Psoas muscle (tissue), 8 donors: ENCODE measurements at regions of chr11 and their contacts with region 1.

Region 1: GRCh38 chr11:58579192-58580129 is 598 bp downstream of the ZFP91 start:
- DNase-seq: peak; percentile 93 to 96
- ATAC-seq: peak; percentile 69 to 76 (median 74)
- H3K4me3 ChIP-seq: peak overlapping the region; percentile 92
- H3K27ac ChIP-seq: peak overlapping the region; percentile 100
- H3K4me1 ChIP-seq: peaks cover 68% of the 10 kb centered on the region
- H3K27me3 ChIP-seq: no peaks in the 10 kb centered on the region
- CTCF ChIP-seq: peak; percentile 75

Region 2: DNA sequence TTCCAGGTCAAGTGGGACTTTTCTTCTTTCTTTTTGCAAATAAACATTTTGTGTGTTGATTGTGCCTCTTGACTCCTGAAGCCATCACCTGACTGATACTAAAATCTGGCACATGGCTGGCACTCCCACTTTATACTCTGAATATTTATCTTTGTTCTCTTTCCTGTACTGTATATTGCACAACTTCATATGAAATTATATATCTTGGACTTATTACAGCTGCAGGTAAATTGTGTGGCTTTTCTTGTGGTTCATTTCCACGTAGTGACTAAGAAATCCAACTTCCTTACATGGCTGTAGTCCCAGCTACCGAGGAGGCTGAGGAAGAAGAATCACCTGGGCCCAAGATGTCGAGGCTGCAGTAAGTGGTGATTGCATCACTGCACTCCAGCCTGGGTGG is 113.8 kb before region 1 on chr11:
- intact Hi-C with region 1: no loop called
- DNase-seq: no peak
- ATAC-seq: no peak
- H3K4me3 ChIP-seq: no peak overlapping the region
- H3K27ac ChIP-seq: no peak overlapping the region
- H3K4me1 ChIP-seq: no peaks in the 10 kb centered on the region
- H3K27me3 ChIP-seq: peaks cover 0 to 2% (median 0%) of the 10 kb centered on the region in 3 donors
- CTCF ChIP-seq: no peak

Region 3: GRCh38 chr11:58616594-58616993 is 37.1 kb after region 1 on chr11:
- intact Hi-C with region 1: loop called in 1 of 2 experiments (anchors 5 kb)
- DNase-seq: peak; percentile 73 to 75
- ATAC-seq: peak; percentile 81 to 96 (median 92)
- H3K4me3 ChIP-seq: no peak overlapping the region
- H3K27ac ChIP-seq: peak overlapping the region; percentile 54
- H3K4me1 ChIP-seq: peaks cover 22% of the 10 kb centered on the region
- H3K27me3 ChIP-seq: no peaks in the 10 kb centered on the region
- CTCF ChIP-seq: no peak

Region 4: DNA sequence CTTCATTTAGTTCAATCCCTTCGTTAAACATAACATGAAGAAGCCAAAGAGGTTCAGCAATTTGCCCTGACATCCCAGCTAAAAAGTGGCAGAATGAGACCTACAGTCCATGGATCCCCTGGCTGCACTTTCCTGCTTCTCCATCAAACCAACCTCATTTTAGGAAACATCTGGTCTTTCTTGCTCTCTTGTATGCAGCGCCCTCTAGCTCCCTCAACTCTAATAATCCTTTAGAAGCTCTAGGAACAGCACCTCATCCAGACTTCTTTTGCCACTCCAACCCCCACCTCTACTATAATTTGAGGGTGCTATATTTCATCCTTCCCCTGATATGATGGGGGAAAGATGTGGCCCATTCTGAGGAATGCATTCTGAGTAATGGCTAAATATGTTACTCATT is 50.4 kb after region 1 on chr11:
- intact Hi-C with region 1: loop called (anchors 5 kb)
- DNase-seq: no peak
- ATAC-seq: peak in 3 of 4 donors; percentile 34 to 51 (median 43)
- H3K4me3 ChIP-seq: no peak overlapping the region
- H3K27ac ChIP-seq: no peak overlapping the region
- H3K4me1 ChIP-seq: peaks cover 19% of the 10 kb centered on the region
- H3K27me3 ChIP-seq: no peaks in the 10 kb centered on the region
- CTCF ChIP-seq: peak; percentile 33

Region 5: GRCh38 chr11:58675334-58676155 is 96.1 kb after region 1 on chr11:
- intact Hi-C with region 1: loop called (anchors 2 to 5 kb)
- DNase-seq: peak; percentile 75 to 87
- ATAC-seq: peak; percentile 85 to 96 (median 86)
- H3K4me3 ChIP-seq: no peak overlapping the region
- H3K27ac ChIP-seq: no peak overlapping the region
- H3K4me1 ChIP-seq: no peaks in the 10 kb centered on the region
- H3K27me3 ChIP-seq: peaks cover 0 to 4% (median 0%) of the 10 kb centered on the region in 3 donors
- CTCF ChIP-seq: peak; percentile 90